Activated CD4-positive, alpha-beta memory T cell treated with anti-CD3 and anti-CD28 coated beads for 36 hours (primary cell): ENCODE measurements at regions of chr17 and their contacts with region 1.

Region 1: DNA sequence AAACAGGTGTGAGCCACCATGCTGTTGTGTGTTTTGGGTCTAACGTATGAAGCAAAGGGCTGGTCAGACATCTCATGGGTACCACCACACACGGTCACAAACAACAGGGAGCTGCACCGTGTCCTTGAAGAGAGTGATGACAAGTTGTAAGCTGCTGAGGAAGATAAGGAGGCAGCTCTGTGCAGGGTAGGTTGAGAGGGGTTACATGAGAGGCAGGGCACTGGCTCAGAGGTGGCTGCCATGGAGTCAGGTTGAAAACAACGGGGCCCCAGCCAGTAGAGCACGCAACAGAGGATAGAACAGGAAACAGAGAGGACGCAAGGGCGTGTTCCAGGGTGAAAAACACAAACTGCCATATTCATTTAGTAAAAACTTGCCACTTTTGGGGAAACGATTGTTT is 52.2 kb downstream of the TRARG1 start:
- DNase-seq: peak; percentile 40
- H3K4me3 Mint-ChIP-seq: no peak overlapping the region
- H3K27ac Mint-ChIP-seq: no peak overlapping the region
- H3K4me1 Mint-ChIP-seq: peaks cover 11% of the 10 kb centered on the region
- H3K27me3 Mint-ChIP-seq: no peaks in the 10 kb centered on the region

Region 2: GRCh38 chr17:933312-934083 is 398.2 kb before region 1 on chr17:
- CTCF ChIA-PET with region 1: no interaction called
- POLR2A ChIA-PET with region 1: no interaction called
- intact Hi-C with region 1: no loop called
- DNase-seq: no peak
- H3K4me3 Mint-ChIP-seq: no peak overlapping the region
- H3K27ac Mint-ChIP-seq: no peak overlapping the region
- H3K4me1 Mint-ChIP-seq: no peaks in the 10 kb centered on the region
- H3K27me3 Mint-ChIP-seq: peaks cover 1% of the 10 kb centered on the region

Region 3: DNA sequence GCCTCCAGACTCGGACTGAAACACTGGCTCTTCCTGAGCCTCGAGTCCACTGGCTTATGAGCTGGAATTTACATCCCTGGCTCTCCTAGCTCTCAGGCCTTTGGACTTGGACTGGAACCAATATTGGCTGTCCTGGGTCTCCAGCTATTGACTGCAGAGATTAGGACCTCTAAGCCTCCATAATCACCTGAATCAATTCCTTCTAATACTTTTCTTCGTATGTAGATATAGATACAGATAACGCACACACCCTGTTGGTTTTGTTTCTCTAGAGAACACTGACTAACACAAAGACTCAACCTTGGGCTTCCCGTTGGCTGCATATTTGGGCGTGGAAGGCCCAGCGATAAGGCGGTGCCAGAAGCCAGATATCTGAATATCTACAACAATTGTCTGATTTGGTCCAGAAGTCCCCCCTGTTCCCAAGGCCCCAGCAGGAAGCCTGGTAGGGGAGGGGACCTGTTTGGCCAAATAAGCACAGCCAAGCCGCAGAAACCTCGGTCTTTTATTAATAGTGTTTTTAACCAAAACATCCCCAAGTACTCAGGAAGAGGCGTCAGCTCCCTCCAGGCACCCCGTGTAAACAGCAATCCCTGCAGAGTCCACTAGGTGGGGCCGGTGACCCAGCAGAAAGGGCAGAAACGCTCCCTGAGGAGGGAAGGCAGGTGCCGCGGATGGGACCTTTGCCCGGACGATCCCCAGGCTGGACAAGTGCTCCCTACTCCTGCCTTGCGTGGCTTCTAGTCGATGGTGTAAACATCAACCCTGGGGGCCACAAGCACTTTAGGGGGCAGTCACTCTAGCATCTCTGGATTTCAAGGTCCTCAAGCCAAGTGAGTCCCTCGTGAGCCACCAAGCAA is 208.9 kb before region 1 on chr17:
- CTCF ChIA-PET with region 1: interaction called, 10 read pairs
- POLR2A ChIA-PET with region 1: no interaction called
- intact Hi-C with region 1: loop called (anchors 5 kb)
- DNase-seq: peak; percentile 90
- H3K4me3 Mint-ChIP-seq: no peak overlapping the region
- H3K27ac Mint-ChIP-seq: no peak overlapping the region
- H3K4me1 Mint-ChIP-seq: peaks cover 6% of the 10 kb centered on the region
- H3K27me3 Mint-ChIP-seq: no peaks in the 10 kb centered on the region

Region 4: DNA sequence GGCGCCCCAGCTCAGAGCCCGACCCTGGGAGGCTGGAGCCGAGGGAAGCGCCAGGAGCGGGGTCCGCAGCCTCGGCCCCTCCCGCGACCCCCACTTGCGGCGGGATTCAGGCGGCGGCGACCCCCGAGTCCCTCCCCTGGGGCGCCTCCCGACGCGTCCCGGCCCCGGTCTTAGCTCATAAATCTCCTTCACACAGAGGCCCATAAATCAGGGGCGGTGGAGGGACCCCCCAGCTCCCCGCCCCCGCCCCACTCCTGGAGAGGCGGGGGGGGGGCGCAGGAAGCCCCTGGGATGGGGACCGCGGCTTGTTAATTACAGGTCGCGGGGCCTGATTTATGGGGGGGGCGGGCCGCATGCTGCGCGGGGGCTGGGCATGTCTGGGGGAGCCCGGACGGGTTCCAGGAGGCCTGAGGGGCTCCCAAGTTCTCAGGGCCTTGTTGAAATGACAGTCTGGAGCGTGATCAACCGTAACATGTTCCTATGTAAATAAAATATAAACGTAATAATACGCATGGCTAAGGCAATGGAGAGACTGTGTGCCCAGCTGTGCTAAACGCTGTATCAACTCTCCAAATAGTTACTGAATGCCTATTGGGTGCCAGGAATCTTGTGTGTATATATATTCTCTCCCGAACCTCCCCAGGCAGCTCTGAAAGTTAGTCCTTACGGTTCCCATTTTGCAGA is 71.5 kb before region 1 on chr17:
- CTCF ChIA-PET with region 1: interaction called, 8 read pairs
- POLR2A ChIA-PET with region 1: no interaction called
- intact Hi-C with region 1: loop called (anchors 1 kb)
- DNase-seq: no peak
- H3K4me3 Mint-ChIP-seq: no peak overlapping the region
- H3K27ac Mint-ChIP-seq: no peak overlapping the region
- H3K4me1 Mint-ChIP-seq: peaks cover 7% of the 10 kb centered on the region
- H3K27me3 Mint-ChIP-seq: no peaks in the 10 kb centered on the region

Region 5: GRCh38 chr17:1267471-1267947 is 64.2 kb before region 1 on chr17:
- CTCF ChIA-PET with region 1: interaction called, 22 read pairs
- POLR2A ChIA-PET with region 1: no interaction called
- intact Hi-C with region 1: loop called (anchors 2 kb)
- DNase-seq: no peak
- H3K4me3 Mint-ChIP-seq: peak overlapping the region; percentile 69
- H3K27ac Mint-ChIP-seq: no peak overlapping the region
- H3K4me1 Mint-ChIP-seq: peaks cover 7% of the 10 kb centered on the region
- H3K27me3 Mint-ChIP-seq: peaks cover 9% of the 10 kb centered on the region

Region 6: DNA sequence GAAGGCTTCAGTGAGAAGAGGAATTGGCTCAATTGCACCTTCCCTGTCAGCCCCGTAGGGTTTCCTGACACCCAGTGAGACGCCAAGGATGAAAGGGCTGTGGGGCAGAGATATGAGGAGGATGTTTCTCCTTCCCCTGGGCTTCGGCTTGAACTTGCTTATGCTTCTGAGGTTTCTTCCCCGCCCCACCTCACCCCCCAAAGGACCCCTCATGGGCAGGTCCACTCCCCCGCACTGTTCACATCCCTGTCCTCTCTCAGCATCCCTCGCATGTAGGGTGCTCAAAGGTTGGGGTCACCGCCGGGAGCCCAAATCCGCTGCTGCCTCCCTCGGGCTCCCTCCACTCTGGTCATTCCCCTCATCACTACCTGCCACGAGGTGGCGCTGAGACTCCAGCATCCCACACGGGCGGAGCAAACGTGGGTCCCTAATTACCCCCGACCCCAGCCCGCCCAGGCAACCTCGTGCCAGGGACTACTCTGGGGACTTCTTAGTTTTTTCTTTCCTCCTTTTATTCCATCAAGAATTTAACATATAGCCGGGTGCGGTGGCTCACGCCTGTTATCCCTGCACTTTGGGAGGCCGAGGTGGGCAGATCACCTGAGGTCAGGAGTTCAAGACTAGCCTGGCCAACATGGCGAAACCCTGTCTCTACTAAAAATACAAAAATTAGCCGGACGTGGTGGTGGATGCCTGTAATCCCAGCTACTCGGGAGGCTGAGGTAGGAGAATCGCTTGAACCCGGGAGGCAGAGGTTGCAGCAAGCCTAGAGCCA is 55.6 kb before region 1 on chr17:
- CTCF ChIA-PET with region 1: interaction called, 22 read pairs
- POLR2A ChIA-PET with region 1: no interaction called
- intact Hi-C with region 1: loop called (anchors 1 kb)
- DNase-seq: peak; percentile 79
- H3K4me3 Mint-ChIP-seq: peak overlapping the region; percentile 6
- H3K27ac Mint-ChIP-seq: no peak overlapping the region
- H3K4me1 Mint-ChIP-seq: peaks cover 3% of the 10 kb centered on the region
- H3K27me3 Mint-ChIP-seq: peaks cover 16% of the 10 kb centered on the region

Region 7: DNA sequence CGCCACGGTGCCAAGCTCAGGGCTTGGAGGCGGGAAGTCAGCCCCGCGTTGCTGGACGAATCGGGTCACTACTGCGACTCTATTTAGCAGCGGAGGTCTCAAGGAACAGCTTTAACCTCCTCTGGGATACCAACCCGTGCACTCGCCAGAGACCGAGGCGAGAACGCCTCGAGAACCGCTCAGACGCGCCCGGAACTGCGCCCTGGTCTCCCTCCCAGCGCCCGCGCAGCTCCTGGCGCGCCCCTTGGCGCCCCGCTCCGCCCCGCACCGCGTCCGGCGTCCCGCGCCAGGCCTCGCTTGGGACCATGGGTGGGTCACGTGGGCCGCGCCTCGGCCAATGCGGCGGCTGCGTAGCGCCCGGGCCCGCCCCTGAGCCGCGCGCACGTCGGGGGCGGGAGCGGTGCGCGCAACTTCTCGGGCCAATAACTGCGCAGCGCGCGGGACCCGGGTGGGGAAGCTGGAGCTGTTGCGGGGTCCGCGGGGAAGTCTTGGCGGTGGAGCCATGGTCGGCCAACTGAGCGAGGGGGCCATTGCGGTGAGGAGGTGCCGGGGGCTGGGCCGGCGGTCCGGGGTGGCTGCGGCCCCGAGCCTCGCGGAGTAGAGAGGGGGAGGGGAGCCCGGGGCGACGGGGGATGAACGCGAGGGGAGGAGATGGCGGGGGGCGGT is 498.0 kb after region 1 on chr17 and contains the starts of genes RPA1 and SMYD4:
- CTCF ChIA-PET with region 1: no interaction called
- POLR2A ChIA-PET with region 1: no interaction called
- intact Hi-C with region 1: no loop called
- DNase-seq: peak; percentile 93
- H3K4me3 Mint-ChIP-seq: peak within 1 kb of the TSS; percentile 89
- H3K27ac Mint-ChIP-seq: peak within 1 kb of the TSS; percentile 83
- H3K4me1 Mint-ChIP-seq: peaks cover 56% of the 10 kb centered on the region
- H3K27me3 Mint-ChIP-seq: no peaks in the 10 kb centered on the region
- total RNA-seq, gene RPA1: 159 to 168 TPM
- total RNA-seq, gene SMYD4: 14.5 to 15.8 TPM